ENCODE measurements at regions of chr19 and their contacts with region 1.

Region 1: DNA sequence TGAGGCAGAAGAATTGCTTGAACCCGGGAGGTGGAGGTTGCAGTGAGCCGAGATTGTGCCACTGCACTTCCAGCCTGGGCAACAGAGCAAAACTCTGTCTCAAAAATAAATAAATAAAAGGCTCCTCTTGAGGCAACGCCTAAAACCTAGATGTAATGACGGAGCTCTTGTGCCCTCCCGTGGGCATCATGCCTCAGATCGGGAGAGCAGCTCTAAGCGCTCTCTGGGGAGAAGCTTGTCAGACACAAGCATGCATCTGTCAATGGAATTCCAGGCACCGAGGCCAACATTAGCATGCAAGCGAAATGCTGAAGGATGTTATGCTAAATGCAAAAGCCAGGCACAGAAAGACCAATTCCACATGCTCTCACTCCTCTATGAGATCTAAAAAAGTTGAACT is 45.6 kb upstream of the MRI1 start:
- DNase-seq: no peak
- ATAC-seq: no peak
- H3K4me3 ChIP-seq: no peak overlapping the region
- H3K4me3 Mint-ChIP-seq: no peak overlapping the region
- H3K27ac ChIP-seq: no peak overlapping the region
- H3K27ac Mint-ChIP-seq: no peak overlapping the region
- H3K4me1 ChIP-seq: no peaks in the 10 kb centered on the region
- H3K4me1 Mint-ChIP-seq: no peaks in the 10 kb centered on the region
- H3K27me3 ChIP-seq: no peaks in the 10 kb centered on the region
- H3K27me3 Mint-ChIP-seq: peaks cover 4 to 16% (median 13%) of the 10 kb centered on the region in 5 donors

Region 2: DNA sequence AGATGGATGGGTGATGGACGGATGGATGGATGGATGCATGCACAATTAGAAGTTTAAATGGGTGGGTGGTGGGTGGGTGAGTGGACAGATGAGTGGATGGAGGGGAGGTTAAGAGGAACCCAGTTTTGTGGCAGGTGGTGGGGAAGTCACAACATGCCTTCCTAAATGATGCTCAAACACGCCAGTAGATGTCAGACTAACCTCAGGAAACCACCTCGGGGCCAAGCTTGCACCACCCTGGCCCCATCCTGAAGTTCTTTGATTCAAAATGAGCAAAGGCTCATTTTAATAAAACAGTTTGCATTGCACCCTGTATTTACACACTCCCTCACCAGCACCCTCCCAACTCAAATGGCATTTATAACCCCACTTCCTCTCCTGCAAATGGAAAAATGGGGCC is 121.1 kb before region 1 on chr19:
- CTCF ChIA-PET with region 1: no interaction called
- POLR2A ChIA-PET with region 1: no interaction called
- intact Hi-C with region 1: loop called (anchors 1 to 5 kb)
- DNase-seq: peak in 8 of 9 donors; percentile 10 to 54 (median 34)
- ATAC-seq: peak; percentile 73
- H3K4me3 ChIP-seq: no peak overlapping the region
- H3K4me3 Mint-ChIP-seq: no peak overlapping the region
- H3K27ac ChIP-seq: no peak overlapping the region
- H3K27ac Mint-ChIP-seq: no peak overlapping the region
- H3K4me1 ChIP-seq: no peaks in the 10 kb centered on the region
- H3K4me1 Mint-ChIP-seq: peaks cover 0 to 4% (median 0%) of the 10 kb centered on the region in 7 donors
- H3K27me3 ChIP-seq: peaks cover 0 to 4% of the 10 kb centered on the region in 2 donors
- H3K27me3 Mint-ChIP-seq: peaks cover 4 to 32% (median 31%) of the 10 kb centered on the region in 5 donors

Region 3: GRCh38 chr19:13644645-13645044 is 74.1 kb before region 1 on chr19:
- CTCF ChIA-PET with region 1: no interaction called
- POLR2A ChIA-PET with region 1: no interaction called
- intact Hi-C with region 1: no loop called
- DNase-seq: no peak
- ATAC-seq: no peak
- H3K4me3 ChIP-seq: no peak overlapping the region
- H3K4me3 Mint-ChIP-seq: no peak overlapping the region
- H3K27ac ChIP-seq: no peak overlapping the region
- H3K27ac Mint-ChIP-seq: no peak overlapping the region
- H3K4me1 ChIP-seq: no peaks in the 10 kb centered on the region
- H3K4me1 Mint-ChIP-seq: peaks cover 0 to 1% (median 0%) of the 10 kb centered on the region in 7 donors
- H3K27me3 ChIP-seq: no peaks in the 10 kb centered on the region
- H3K27me3 Mint-ChIP-seq: peaks cover 2 to 20% (median 15%) of the 10 kb centered on the region in 5 donors